Endothelial cell of umbilical vein (primary cell): ENCODE measurements at regions of chr9 and their contacts with region 1.

Region 1: DNA sequence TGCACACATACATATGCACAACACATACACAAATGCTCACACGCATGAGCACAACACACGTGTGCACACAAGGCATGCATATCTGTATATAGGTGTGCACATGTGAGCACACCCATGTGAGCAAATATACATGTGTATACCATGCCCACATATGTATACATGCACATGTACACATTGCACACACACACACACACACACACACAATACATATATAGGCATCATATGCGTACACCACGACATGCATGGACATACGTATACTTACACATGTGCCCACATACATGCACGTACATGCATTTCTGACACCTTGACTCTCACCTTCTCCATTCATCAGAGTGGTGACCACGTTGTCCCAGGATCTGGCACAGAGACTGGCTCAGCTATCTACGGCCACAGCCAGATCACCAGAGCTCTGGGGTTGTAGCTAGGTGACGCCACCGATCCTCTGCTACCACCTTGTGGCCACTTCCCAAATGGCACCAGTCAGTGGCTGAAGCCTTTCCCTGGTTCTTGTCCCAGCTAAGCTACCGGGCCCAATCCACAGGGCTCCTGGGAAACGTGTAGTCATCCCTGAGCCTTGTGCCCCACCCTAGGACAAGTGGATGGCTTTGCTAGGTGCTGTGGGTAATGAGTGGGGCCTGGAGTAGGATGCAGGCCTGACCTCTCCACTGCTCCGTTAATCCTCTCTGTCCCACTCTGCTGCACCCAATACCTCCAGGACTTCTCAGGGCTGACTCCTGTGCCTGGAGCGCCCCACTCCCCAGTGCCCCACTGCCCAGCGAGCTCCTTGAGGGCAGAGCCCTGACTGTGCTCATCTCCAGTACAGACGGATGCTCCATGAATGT is 194.4 kb downstream of the RGS3 start:
- DNase-seq: peak; percentile 89
- H3K4me3 ChIP-seq: no peak overlapping the region
- H3K27ac ChIP-seq: no peak overlapping the region
- H3K4me1 ChIP-seq: peaks cover 45% of the 10 kb centered on the region
- H3K27me3 ChIP-seq: peaks cover 0 to 8% of the 10 kb centered on the region in 2 experiments
- CTCF ChIP-seq: peak; percentile 92 to 96
- POLR2A ChIP-seq: no peak

Region 2: DNA sequence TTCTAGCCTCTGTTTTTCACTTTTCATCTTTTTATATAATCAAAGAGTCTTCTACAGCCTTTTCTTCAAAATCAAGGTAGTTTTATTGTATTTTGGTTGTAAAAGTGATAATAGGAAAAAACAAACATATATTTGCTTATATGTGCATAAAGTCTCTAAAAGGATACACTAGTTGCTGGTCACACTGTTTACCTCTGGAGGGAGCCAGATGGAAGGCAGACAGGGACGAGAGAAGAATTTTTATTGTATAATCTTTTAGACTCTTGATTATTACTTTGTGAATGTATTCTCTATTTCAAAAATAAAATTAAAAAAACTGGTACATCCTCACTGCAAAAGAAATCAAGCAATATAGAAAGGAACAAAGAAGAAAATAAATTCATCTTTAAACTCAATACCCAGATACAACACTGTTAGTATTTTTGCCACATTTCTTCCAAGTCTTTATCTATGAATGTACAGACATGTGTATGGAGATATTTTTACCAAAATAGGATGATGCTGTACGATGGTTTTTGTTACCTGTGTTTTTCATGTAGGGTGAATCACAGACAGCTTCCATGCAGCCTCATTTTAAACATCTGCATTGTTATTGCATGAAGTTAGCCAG is 348.6 kb before region 1 on chr9:
- CTCF ChIA-PET with region 1: interaction called, 14 read pairs
- POLR2A ChIA-PET with region 1: no interaction called
- dilution Hi-C with region 1: no loop called
- intact Hi-C with region 1: loop called (anchors 1 kb)
- DNase-seq: peak; percentile 55
- H3K4me3 ChIP-seq: no peak overlapping the region
- H3K27ac ChIP-seq: no peak overlapping the region
- H3K4me1 ChIP-seq: no peaks in the 10 kb centered on the region
- H3K27me3 ChIP-seq: no peaks in the 10 kb centered on the region
- CTCF ChIP-seq: peak; percentile 41 to 53
- POLR2A ChIP-seq: no peak

Region 3: GRCh38 chr9:113446323-113446740 is 211.6 kb before region 1 on chr9:
- CTCF ChIA-PET with region 1: interaction called, 166 read pairs
- POLR2A ChIA-PET with region 1: interaction called, 5 read pairs
- dilution Hi-C with region 1: no loop called
- intact Hi-C with region 1: loop called (anchors 1 kb)
- DNase-seq: peak; percentile 79
- H3K4me3 ChIP-seq: no peak overlapping the region
- H3K27ac ChIP-seq: no peak overlapping the region
- H3K4me1 ChIP-seq: peaks cover 4% of the 10 kb centered on the region
- H3K27me3 ChIP-seq: no peaks in the 10 kb centered on the region
- CTCF ChIP-seq: peak; percentile 28 to 35
- POLR2A ChIP-seq: no peak

Region 4: DNA sequence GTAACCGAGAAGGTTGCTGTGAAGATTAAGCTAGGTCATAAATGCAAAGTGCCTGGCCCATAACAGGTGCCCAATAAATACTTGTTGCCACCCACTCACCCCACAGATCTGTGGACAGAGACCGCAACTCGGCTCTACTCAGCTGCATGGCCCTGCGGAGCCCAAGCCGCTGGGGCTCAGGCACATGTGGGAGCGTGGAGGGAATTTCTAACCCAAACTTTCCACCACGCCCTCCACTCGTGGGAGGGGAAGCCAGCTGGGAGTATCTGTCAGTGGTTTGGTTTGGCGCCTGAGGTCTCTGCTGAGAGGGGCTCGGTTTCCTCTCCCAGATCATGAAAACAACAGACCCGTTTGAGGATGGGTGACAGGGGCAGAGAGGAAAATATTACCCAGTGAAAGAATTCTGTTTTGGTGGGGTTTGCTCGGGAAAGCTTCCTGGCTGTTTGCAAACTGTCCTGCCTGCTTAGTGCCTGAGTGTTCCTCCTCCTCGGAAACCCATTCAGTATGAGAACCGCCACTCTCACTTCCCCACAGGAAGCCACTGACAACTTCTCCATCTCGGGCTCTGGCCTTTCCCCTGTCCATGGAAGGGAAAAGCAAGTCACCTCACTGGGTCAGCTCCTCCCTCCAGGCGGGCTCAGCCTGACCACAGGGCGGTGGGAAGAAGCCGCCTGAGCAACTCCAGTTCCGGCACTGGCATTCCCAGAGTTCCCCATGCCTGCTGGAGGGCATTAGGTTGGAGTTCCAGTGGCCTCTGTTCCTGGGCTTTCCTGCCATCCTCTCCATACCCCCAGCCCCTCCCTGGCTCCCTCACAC is 134.3 kb before region 1 on chr9:
- CTCF ChIA-PET with region 1: interaction called, 29 read pairs
- POLR2A ChIA-PET with region 1: interaction called, 4 read pairs
- dilution Hi-C with region 1: no loop called
- intact Hi-C with region 1: loop called (anchors 1 kb)
- DNase-seq: peak; percentile 85
- H3K4me3 ChIP-seq: no peak overlapping the region
- H3K27ac ChIP-seq: peak overlapping the region; percentile 80
- H3K4me1 ChIP-seq: peaks cover 65% of the 10 kb centered on the region
- H3K27me3 ChIP-seq: no peaks in the 10 kb centered on the region
- CTCF ChIP-seq: no peak
- POLR2A ChIP-seq: peak; percentile 21

Region 5: GRCh38 chr9:113602126-113603044 is 55.5 kb before region 1 on chr9:
- CTCF ChIA-PET with region 1: interaction called, 1,173 read pairs
- POLR2A ChIA-PET with region 1: interaction called, 75 read pairs
- dilution Hi-C with region 1: loop called (anchors 10 kb)
- intact Hi-C with region 1: no loop called
- DNase-seq: peak; percentile 63
- H3K4me3 ChIP-seq: no peak overlapping the region
- H3K27ac ChIP-seq: no peak overlapping the region
- H3K4me1 ChIP-seq: peaks cover 45% of the 10 kb centered on the region
- H3K27me3 ChIP-seq: no peaks in the 10 kb centered on the region
- CTCF ChIP-seq: no peak
- POLR2A ChIP-seq: no peak

Region 6: DNA sequence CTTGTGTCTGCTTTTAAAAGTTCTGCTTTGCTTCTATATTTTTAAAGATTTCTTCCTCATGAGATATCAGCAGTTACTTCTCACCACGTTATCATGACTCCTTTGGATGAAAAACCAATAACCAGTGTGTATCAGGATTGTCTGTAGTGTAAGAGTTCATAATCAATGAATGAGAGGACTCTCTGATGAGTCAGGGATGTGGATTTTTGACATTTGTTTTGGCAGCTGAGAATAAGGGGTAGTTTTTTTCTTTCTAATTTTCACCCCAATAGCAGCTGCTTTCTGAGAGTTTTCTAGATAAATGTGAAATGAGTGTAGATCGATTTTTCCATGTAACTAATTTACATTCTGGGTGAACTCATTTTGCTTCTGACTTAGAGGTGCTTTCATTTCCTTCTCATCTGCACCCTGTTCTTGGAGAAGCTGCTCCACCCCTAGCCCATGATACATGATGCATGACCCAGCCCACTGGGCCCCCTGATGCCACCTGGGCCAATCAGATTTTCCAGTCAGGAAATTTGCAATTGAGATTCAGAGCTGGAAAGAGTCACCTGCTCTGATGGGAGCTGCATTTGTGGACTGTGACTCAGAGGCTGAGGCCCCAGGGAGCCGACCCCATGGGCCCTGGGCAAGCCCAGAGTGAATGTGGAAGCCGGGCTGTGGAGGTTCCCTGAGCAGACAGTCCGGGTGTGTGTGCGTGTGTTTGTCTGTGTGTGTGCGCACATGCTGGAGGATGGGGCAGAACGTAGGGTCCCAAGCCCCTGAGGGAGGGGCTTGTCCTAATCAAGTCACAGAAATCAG is 35.1 kb before region 1 on chr9:
- CTCF ChIA-PET with region 1: interaction called, 50 read pairs
- POLR2A ChIA-PET with region 1: interaction called, 23 read pairs
- dilution Hi-C with region 1: no loop called
- intact Hi-C with region 1: loop called (anchors 1 kb)
- DNase-seq: peak; percentile 82
- H3K4me3 ChIP-seq: no peak overlapping the region
- H3K27ac ChIP-seq: peak overlapping the region; percentile 100
- H3K4me1 ChIP-seq: peaks cover 53% of the 10 kb centered on the region
- H3K27me3 ChIP-seq: no peaks in the 10 kb centered on the region
- CTCF ChIP-seq: no peak
- POLR2A ChIP-seq: no peak

Region 7: GRCh38 chr9:113675475-113675941 is 17.6 kb after region 1 on chr9:
- CTCF ChIA-PET with region 1: interaction called, 15 read pairs
- POLR2A ChIA-PET with region 1: interaction called, 5 read pairs
- dilution Hi-C with region 1: no loop called
- intact Hi-C with region 1: loop called (anchors 1 kb)
- DNase-seq: peak; percentile 99
- H3K4me3 ChIP-seq: no peak overlapping the region
- H3K27ac ChIP-seq: peak overlapping the region; percentile 83
- H3K4me1 ChIP-seq: peaks cover 30% of the 10 kb centered on the region
- H3K27me3 ChIP-seq: no peaks in the 10 kb centered on the region
- CTCF ChIP-seq: no peak
- POLR2A ChIP-seq: peak; percentile 64

Region 8: GRCh38 chr9:113943112-113944009 is 285.4 kb after region 1 on chr9:
- CTCF ChIA-PET with region 1: no interaction called
- POLR2A ChIA-PET with region 1: no interaction called
- dilution Hi-C with region 1: no loop called
- intact Hi-C with region 1: no loop called
- DNase-seq: no peak
- H3K4me3 ChIP-seq: no peak overlapping the region
- H3K27ac ChIP-seq: no peak overlapping the region
- H3K4me1 ChIP-seq: no peaks in the 10 kb centered on the region
- H3K27me3 ChIP-seq: no peaks in the 10 kb centered on the region
- CTCF ChIP-seq: no peak
- POLR2A ChIP-seq: no peak